ENCODE measurements at regions of chr3 and their contacts with region 1.

Region 1: GRCh38 chr3:30511524-30512278 is 94.7 kb upstream of the TGFBR2 start:
- DNase-seq: peak; percentile 98
- ATAC-seq: peak; percentile 88
- H3K4me3 ChIP-seq: no peak overlapping the region
- H3K27ac ChIP-seq: peak overlapping the region; percentile 86; the same call in 1 of the 2 replicates
- H3K4me1 ChIP-seq: peaks cover 6% of the 10 kb centered on the region
- H3K27me3 ChIP-seq: no peaks in the 10 kb centered on the region
- CTCF ChIP-seq: no peak
- POLR2A ChIP-seq: no peak
- RAD21 ChIP-seq: peak; percentile 24; the same call in 1 of the 2 replicates

Region 2: GRCh38 chr3:30167541-30168011 is 344.1 kb before region 1 on chr3:
- CTCF ChIA-PET with region 1: no interaction called
- POLR2A ChIA-PET with region 1: no interaction called
- dilution Hi-C with region 1: no loop called
- in situ Hi-C with region 1: no loop called
- intact Hi-C with region 1: no loop called
- DNase-seq: peak; percentile 22
- ATAC-seq: no peak
- H3K4me3 ChIP-seq: no peak overlapping the region
- H3K27ac ChIP-seq: no peak overlapping the region
- H3K4me1 ChIP-seq: 0 out of 2 replicates have a peak, but pooled peaks cover 1% of the 10 kb centered on the region
- H3K27me3 ChIP-seq: no peaks in the 10 kb centered on the region
- CTCF ChIP-seq: no peak
- POLR2A ChIP-seq: no peak
- RAD21 ChIP-seq: no peak

Region 3: DNA sequence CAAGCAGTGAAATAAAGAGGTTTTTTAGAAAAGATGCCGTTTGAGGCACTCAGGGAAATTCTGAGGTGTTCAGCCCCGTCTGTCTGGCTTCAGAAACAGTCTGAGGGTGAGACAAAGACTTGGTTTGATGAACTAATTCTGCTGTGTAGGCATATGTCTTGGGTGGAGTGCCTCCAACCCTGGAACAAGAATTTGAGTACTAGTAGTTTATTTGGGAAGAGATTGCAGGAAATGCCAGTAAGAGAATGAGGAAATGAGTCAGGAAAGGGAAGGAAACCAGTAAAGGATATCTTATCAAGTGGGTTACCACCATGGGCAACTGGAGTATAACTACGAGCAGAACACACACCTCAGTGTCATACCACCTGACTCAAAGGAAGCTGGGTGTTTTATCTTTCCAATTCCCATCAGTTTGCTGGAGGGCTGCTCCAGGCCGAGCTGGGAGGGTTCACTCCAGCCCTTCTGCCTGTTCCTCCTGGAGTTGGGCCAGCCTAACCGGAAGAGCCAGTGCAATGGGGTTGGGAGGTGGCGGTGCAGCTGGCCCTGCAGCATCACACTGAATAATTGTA is 170.0 kb after region 1 on chr3:
- CTCF ChIA-PET with region 1: no interaction called
- POLR2A ChIA-PET with region 1: no interaction called
- dilution Hi-C with region 1: no loop called
- in situ Hi-C with region 1: no loop called
- intact Hi-C with region 1: loop called (anchors 5 kb)
- DNase-seq: peak; percentile 27
- ATAC-seq: peak; percentile 35
- H3K4me3 ChIP-seq: no peak overlapping the region
- H3K27ac ChIP-seq: peak overlapping the region; percentile 18; the same call in 1 of the 2 replicates
- H3K4me1 ChIP-seq: peaks cover 19% of the 10 kb centered on the region
- H3K27me3 ChIP-seq: no peaks in the 10 kb centered on the region
- CTCF ChIP-seq: no peak
- POLR2A ChIP-seq: no peak
- RAD21 ChIP-seq: no peak

Region 4: DNA sequence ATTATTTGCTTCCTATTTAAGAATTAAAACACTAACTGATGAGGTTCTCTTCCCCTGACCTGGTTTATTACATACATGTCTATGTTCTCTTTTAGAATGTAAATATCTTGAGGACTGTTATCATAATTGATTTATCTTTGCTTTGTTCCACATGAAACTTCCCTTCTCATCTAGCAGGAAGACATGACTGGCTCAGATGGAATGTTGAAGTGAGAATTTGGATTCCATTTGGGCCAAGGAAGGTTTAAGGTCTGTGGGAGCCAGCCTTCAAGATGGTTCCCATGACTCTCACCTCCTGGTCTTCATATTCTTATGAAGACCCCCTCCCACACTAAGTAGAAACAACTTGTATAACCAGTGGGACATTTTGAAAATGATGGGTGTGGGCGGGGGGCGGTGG is 605.0 kb after region 1 on chr3:
- CTCF ChIA-PET with region 1: no interaction called
- POLR2A ChIA-PET with region 1: no interaction called
- dilution Hi-C with region 1: no loop called
- in situ Hi-C with region 1: no loop called
- intact Hi-C with region 1: no loop called
- DNase-seq: peak; percentile 50
- ATAC-seq: no peak
- H3K4me3 ChIP-seq: no peak overlapping the region
- H3K27ac ChIP-seq: no peak overlapping the region
- H3K4me1 ChIP-seq: no peaks in the 10 kb centered on the region
- H3K27me3 ChIP-seq: no peaks in the 10 kb centered on the region
- CTCF ChIP-seq: no peak
- POLR2A ChIP-seq: no peak
- RAD21 ChIP-seq: no peak

Measured in IMR-90 (cell line).